ENCODE measurements at regions of chr10 and their contacts with region 1.

Region 1: GRCh38 chr10:125160856-125161706 is 718 bp upstream of the CTBP2 start:
- DNase-seq: peak in 9 of 10 donors; percentile 49 to 79 (median 67)
- H3K4me3 ChIP-seq: peak overlapping the region; percentile 48 to 87 (median 75)
- H3K27ac ChIP-seq: peak overlapping the region in 57 of 59 donors; percentile 36 to 98 (median 86)
- H3K27me3 ChIP-seq: no peaks in the 10 kb centered on the region
- CTCF ChIP-seq: peak in 54 of 56 donors; percentile 11 to 75 (median 54)

Region 2: GRCh38 chr10:125000366-125001312 is 160.4 kb before region 1 on chr10:
- intact Hi-C with region 1: loop called (anchors 2 to 5 kb)
- DNase-seq: peak in 7 of 10 donors; percentile 22 to 70 (median 51)
- H3K4me3 ChIP-seq: peak overlapping the region in 17 of 59 donors; percentile 4 to 42 (median 20)
- H3K27ac ChIP-seq: peak overlapping the region; percentile 70 to 99 (median 94)
- H3K27me3 ChIP-seq: no peaks in the 10 kb centered on the region
- CTCF ChIP-seq: peak in 50 of 56 donors; percentile 19 to 64 (median 45)

Region 3: DNA sequence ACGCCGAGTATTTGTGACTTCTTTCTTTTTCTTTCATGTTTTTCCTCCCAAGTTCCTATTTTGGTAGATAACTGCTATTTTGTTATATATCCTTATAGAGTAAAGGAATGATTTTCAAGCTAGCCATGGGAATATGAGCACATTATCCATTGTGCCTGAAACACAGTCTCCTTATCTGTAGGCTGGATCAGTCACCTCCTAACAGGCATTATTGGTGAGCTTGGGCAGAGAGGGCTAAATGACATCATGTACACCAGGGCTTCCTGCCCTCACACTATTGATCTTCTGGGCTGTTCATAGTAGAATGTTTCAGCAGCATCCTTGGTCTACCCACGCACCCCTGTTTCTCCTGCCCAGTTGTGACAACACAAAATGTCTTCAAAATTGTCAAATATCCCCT is 87.4 kb after region 1 on chr10:
- intact Hi-C with region 1: no loop called
- DNase-seq: no peak
- H3K4me3 ChIP-seq: no peak overlapping the region
- H3K27ac ChIP-seq: no peak overlapping the region
- H3K27me3 ChIP-seq: peaks cover 0 to 36% (median 0%) of the 10 kb centered on the region in 45 donors
- CTCF ChIP-seq: no peak